Lower leg skin (tissue), 4 donors: ENCODE measurements at regions of chr1 and their contacts with region 1.

Region 1: DNA sequence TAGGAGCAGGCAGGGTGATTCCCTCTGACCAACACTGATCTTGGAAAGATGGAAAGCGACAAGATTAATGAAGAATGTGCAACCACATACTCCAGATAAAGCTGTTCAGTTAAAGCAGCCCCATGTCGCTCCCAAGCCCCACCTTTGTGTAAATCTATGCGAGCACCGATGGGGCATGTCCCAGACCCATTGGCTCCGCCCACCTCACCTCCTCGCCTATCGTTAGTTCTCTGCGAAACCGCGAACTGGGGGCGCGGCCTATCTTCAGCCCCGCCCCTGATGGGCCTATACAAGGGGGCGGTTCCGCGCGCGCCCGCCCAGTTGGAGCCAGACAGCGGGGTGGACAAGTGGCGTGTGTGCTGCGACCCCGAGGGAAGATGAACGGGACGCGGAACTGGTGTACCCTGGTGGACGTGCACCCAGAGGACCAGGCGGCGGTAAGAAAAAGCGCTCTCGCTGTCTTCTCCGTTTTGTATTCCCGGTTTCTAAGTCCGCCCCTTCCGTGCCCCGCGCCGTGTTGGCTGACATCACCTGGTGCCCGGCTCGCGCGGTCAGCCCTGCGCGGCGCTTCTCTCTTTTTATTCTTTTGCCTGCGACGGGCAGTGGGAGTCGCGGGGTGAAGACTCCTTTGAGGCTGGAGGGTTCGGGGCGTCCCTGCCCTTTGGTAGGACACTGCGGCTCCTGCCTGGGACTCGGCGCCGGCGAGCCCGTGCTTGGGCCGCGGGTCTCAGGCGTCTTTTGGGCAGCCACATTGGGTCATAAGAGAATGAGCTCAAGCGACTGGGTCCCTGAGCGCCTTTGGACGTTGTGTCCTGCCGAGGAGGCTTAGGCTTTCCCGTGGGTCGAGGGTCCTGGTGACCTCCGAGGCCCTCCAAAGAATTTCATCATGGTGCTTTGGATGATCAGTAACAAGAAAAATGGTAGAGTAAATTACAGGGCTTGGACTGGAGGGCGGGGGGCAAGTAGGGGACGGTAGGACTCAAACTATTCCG is at the start of gene TUFT1:
- DNase-seq: peak; percentile 94 to 98
- H3K4me3 ChIP-seq: peak within 1 kb of the TSS; percentile 66
- CTCF ChIP-seq: no peak
- POLR2A ChIP-seq: peak in 1 of 2 donors; percentile 88
- total RNA-seq, gene TUFT1: 140 to 186 (median 161) TPM

Region 2: DNA sequence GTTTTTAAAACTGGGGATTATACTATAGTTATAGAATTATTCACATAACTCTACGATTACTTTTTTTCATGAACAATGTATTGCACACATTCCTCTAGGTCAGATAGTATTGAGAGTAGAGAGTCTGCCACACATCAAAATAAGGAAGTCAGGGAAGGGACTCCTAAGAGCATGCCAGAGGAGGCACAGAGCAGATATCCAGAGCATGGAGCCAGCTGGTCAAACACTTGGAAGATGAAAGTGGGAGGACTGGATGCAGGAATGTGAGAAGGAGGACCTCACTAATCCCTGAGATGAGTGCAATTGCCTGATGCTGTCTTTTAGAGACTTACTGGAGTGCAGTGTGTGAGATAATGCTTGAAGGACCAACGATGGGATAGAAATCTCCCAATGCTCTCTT is 183.6 kb before region 1 on chr1:
- intact Hi-C with region 1: no loop called
- DNase-seq: no peak
- H3K4me3 ChIP-seq: no peak overlapping the region
- CTCF ChIP-seq: no peak
- POLR2A ChIP-seq: no peak

Region 3: DNA sequence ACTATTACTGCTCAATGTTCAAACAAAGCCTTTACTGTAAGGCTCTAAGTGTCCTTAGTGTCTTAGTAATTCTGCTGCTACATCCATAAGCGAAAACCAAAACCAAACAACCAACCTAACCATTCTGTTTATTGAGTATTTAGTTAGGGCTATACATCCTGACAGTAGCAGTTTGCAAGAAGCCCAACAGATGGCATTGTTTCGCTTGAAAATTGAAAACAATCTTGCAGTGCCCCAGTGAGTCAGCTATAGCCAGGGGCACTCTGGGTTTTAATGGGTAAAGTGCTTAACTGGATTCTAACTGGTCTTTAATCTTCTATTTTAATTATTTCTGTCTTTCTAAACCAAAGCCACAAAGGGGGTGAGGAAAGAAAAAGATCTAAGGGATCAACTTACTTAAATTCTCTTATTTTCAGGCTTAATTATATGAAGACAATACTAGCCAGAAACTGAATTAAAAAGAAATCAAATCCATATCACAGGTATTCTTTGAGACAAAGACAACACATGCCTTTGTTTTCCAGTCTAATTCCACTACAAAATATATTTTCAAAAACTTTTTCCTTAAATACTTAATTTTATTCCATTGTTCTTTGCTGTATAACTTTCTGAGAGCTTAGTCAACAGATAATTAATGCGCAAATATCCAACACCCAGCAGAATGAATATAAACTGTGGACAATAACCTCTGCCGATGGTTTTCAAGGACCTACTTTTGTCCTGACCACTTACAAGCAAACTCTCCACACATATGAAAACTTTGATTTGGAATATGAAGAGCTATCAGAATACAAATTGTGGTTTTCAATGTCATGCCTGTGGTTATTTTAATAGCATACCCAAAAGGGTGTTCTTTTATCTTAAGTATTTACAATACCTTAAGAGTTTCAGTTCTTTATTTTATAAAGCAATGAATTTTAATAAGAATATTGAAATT is 96.2 kb before region 1 on chr1:
- intact Hi-C with region 1: no loop called
- DNase-seq: peak in 1 of 2 donors; percentile 74
- H3K4me3 ChIP-seq: no peak overlapping the region
- CTCF ChIP-seq: peak in 1 of 3 donors; percentile 25
- POLR2A ChIP-seq: no peak

Region 4: GRCh38 chr1:151839457-151840405 is 299.4 kb after region 1 on chr1 and contains the start of gene C2CD4D:
- intact Hi-C with region 1: loop called (anchors 10 kb)
- DNase-seq: peak; percentile 53 to 91
- H3K4me3 ChIP-seq: peak within 1 kb of the TSS; percentile 10
- CTCF ChIP-seq: no peak
- POLR2A ChIP-seq: no peak
- total RNA-seq, gene C2CD4D: 1.4 to 4.2 (median 2.3) TPM